ENCODE measurements at regions of chr17 and their contacts with region 1.

Region 1: DNA sequence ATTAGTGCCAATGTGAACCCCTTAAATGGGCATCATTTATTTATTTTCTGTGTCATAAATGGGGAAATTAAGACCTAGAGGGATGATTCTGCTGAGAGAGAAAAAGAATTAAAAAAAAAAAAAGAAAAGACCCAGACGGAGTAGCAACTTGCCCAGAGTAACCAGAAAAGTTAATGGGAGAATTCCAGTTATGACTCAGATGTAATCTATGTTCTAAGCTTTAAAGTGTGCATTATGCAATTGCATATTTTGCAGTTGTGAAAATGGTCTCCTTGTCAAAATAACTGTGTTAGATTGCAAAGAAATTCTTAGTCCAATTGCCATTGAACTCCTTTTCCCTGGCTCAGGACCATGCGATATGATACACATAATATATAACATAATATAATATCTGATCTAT is 38.6 kb upstream of the TBX2 start:
- DNase-seq: no peak
- ATAC-seq: no peak
- H3K4me3 ChIP-seq: no peak overlapping the region
- H3K27ac ChIP-seq: no peak overlapping the region
- H3K4me1 ChIP-seq: no peaks in the 10 kb centered on the region
- H3K27me3 ChIP-seq: no peaks in the 10 kb centered on the region
- CTCF ChIP-seq: no peak
- EP300 ChIP-seq: no peak
- POLR2A ChIP-seq: no peak
- RAD21 ChIP-seq: no peak

Region 2: GRCh38 chr17:60695960-60696359 is 665.1 kb before region 1 on chr17:
- CTCF ChIA-PET with region 1: no interaction called
- POLR2A ChIA-PET with region 1: no interaction called
- RAD21 ChIA-PET with region 1: no interaction called
- SMC1A ChIA-PET with region 1: no interaction called
- in situ Hi-C with region 1: no loop called
- intact Hi-C with region 1: no loop called
- DNase-seq: no peak
- ATAC-seq: no peak
- H3K4me3 ChIP-seq: no peak overlapping the region
- H3K27ac ChIP-seq: no peak overlapping the region
- H3K4me1 ChIP-seq: no peaks in the 10 kb centered on the region
- H3K27me3 ChIP-seq: no peaks in the 10 kb centered on the region
- CTCF ChIP-seq: no peak
- EP300 ChIP-seq: no peak
- POLR2A ChIP-seq: no peak
- RAD21 ChIP-seq: no peak

Region 3: GRCh38 chr17:60971515-60972369 is 389.3 kb before region 1 on chr17:
- CTCF ChIA-PET with region 1: interaction called, 15 read pairs
- POLR2A ChIA-PET with region 1: no interaction called
- RAD21 ChIA-PET with region 1: interaction called, 4 read pairs
- SMC1A ChIA-PET with region 1: interaction called, 8 read pairs
- in situ Hi-C with region 1: no loop called
- intact Hi-C with region 1: no loop called
- DNase-seq: peak; percentile 4
- ATAC-seq: peak; percentile 91
- H3K4me3 ChIP-seq: no peak overlapping the region
- H3K27ac ChIP-seq: no peak overlapping the region
- H3K4me1 ChIP-seq: no peaks in the 10 kb centered on the region
- H3K27me3 ChIP-seq: no peaks in the 10 kb centered on the region
- CTCF ChIP-seq: peak; percentile 64 to 84 (median 69)
- EP300 ChIP-seq: no peak
- POLR2A ChIP-seq: no peak
- RAD21 ChIP-seq: peak; percentile 74